Head of caudate nucleus (tissue), 42 donors: ENCODE measurements at regions of chr15 and their contacts with region 1.

Region 1: GRCh38 chr15:64153480-64154367 is 2.2 kb downstream of the SNX22 start:
- DNase-seq: peak; percentile 84 to 98 (median 95)

Region 2: GRCh38 chr15:63600616-63601025 is 553.1 kb before region 1 on chr15:
- intact Hi-C with region 1: loop called (anchors 10 kb)
- DNase-seq: peak; percentile 64 to 95 (median 88)

Region 3: GRCh38 chr15:64095795-64096667 is 57.7 kb before region 1 on chr15 and contains the start of gene SNX1:
- intact Hi-C with region 1: loop called (anchors 2 kb)
- DNase-seq: peak; percentile 91 to 98 (median 96)